AG04449 (cell line): ENCODE measurements at regions of chr2 and their contacts with region 1.

Region 1: DNA sequence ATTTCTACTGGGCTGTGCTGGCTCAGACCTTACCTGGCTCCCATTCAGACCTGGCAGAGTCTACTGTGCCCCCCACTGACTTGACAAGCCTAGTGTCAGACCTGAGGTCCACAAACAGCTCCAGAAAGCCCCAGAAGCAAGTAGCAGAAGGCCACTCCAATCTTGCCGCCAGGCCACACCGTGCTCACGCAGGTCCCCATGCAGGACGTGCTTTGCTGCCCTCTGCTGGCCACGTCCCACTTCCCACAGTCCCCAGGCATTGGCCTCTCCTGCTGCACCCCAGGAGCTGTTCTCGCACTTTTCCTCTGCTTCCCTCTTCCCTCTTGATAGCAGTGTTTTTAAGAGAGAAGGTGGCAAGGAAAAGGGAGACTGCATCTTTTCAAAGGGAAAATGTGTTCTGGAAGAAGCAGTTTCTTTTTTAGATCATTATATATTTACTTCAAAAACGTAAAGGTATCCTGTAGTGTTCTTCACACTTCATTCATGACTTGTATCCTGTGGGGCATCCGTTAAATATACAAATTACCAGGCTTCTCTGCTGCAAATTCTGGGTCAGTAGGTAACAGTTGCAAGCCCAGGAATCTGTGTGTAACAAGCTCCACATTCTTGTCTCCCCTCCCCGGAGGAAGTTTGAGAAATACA is 81.4 kb upstream of the PAPOLG start:
- DNase-seq: peak; percentile 19
- H3K4me3 ChIP-seq: no peak overlapping the region
- CTCF ChIP-seq: peak; percentile 97

Region 2: GRCh38 chr2:60641811-60642788 is 32.5 kb before region 1 on chr2:
- CTCF ChIA-PET with region 1: interaction called, 10 read pairs
- POLR2A ChIA-PET with region 1: no interaction called
- DNase-seq: no peak
- H3K4me3 ChIP-seq: no peak overlapping the region
- CTCF ChIP-seq: peak; percentile 43

Region 3: GRCh38 chr2:60652832-60653340 is 21.8 kb before region 1 on chr2:
- CTCF ChIA-PET with region 1: interaction called, 12 read pairs
- POLR2A ChIA-PET with region 1: no interaction called
- DNase-seq: no peak
- H3K4me3 ChIP-seq: no peak overlapping the region
- CTCF ChIP-seq: no peak

Region 4: GRCh38 chr2:60659026-60659425 is 15.6 kb before region 1 on chr2:
- CTCF ChIA-PET with region 1: interaction called, 12 read pairs
- POLR2A ChIA-PET with region 1: no interaction called
- DNase-seq: no peak
- H3K4me3 ChIP-seq: no peak overlapping the region
- CTCF ChIP-seq: no peak

Region 5: DNA sequence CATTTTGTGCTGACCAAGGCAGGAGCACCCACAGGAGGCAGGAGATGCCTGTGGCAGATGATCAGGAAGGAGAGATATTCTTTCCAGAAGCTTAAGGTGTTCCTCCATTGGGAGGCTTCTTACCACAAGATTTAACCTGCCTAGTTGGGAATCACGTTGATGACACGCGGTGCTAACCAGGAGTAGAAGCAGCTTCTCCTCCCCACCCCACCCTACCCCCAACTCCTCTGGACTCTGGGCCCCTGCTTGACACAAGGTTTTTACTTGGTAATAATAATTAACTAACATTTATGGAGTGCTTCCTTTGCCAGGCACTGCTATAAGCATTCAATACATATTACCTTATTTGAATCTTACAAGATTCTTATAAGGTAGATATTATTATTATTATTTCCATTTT is 18.9 kb after region 1 on chr2:
- CTCF ChIA-PET with region 1: interaction called, 32 read pairs
- POLR2A ChIA-PET with region 1: no interaction called
- DNase-seq: no peak
- H3K4me3 ChIP-seq: no peak overlapping the region
- CTCF ChIP-seq: no peak

Region 6: GRCh38 chr2:60707750-60708371 is 33.2 kb after region 1 on chr2:
- CTCF ChIA-PET with region 1: interaction called, 13 read pairs
- POLR2A ChIA-PET with region 1: no interaction called
- DNase-seq: no peak
- H3K4me3 ChIP-seq: no peak overlapping the region
- CTCF ChIP-seq: peak; percentile 44